Activated T-helper 1 cell treated with anti-CD3 and anti-CD28 coated beads, Interleukin-12 subunit alpha, Interleukin-12 subunit beta, Interleukin-2, Interleukin-4 antibody, amounts not matched to agents 30 ng/mL and 10 ng/mL and 1 ng/mL, durations not matched to agents 14 hours and 24 hours and 36 hours (primary cell): ENCODE measurements at regions of chr5 and their contacts with region 1.

Region 1: GRCh38 chr5:87412630-87413342 is at the start of gene CCNH:
- DNase-seq: peak; percentile 95
- H3K4me3 Mint-ChIP-seq: peak within 1 kb of the TSS; percentile 99
- H3K27ac Mint-ChIP-seq: peak within 1 kb of the TSS; percentile 94
- H3K4me1 Mint-ChIP-seq: peaks cover 40% of the 10 kb centered on the region
- H3K27me3 Mint-ChIP-seq: no peaks in the 10 kb centered on the region
- total RNA-seq, gene CCNH: 77.6 and 80.9 TPM in 2 replicates

Region 2: DNA sequence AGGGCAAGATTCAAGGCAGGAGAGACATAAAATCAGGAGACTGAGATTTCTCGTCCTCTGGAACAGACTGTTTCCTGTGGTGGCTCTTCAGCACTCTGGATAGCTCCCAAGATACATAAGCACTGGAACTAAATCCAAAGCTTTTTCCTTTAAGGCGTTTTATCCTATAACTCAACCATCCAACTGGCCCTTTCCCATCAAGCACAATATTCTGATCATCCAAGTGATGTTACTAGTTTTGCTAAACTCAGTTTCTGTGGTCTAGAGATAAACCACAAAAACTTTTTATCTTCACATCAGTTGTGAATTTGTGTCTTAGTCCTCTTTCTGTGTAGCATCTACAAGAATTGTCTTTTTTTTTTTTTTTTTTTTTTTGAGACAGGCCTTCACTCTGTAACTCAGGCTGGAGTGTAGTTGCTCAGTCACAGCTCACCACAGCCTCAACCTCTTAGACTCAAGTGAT is 495.6 kb before region 1 on chr5:
- intact Hi-C with region 1: loop called (anchors 5 kb)
- DNase-seq: peak; percentile 1
- H3K4me3 Mint-ChIP-seq: no peak overlapping the region
- H3K27ac Mint-ChIP-seq: no peak overlapping the region
- H3K4me1 Mint-ChIP-seq: peaks cover 21% of the 10 kb centered on the region
- H3K27me3 Mint-ChIP-seq: peaks cover 17% of the 10 kb centered on the region

Region 3: DNA sequence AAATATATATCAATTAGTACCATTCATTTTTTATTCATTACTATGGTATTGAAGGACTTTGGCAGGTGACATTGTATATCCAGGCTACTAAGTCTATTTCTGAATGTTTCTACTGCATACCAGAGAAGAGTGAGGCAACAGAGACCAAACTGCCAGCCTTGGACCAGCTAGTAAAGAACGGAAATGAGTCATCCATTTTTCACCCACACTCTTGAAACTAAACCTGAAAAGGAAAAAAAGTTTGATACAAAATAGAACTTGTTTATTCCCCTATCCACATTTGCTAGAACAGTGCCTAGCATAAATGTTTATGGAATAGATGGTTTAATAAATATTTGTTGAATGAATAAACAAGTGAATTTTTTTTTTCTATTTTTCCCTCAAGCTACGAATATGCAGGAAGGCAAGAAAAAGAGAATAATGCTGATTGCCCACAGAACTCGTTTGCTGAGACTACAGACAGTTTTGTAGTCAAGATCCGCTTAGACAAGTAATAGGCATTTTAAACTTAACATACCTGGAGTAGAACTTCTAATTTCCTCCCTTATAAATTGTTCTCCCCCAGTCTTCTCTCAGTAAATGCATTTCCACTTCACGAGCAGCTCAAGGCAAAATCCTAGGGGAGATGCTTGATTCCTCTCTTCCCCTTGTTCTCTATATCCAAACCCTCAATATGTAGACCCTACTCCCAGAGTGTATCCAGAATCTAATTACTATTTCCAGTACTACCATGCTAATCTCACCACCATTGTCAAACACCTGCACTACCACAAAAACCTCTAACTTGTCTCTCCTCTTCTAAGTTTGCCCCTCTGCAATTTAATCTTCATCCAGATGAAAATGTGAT is 291.3 kb before region 1 on chr5:
- intact Hi-C with region 1: loop called (anchors 2 kb)
- DNase-seq: peak; percentile 17
- H3K4me3 Mint-ChIP-seq: peak overlapping the region; percentile 40
- H3K27ac Mint-ChIP-seq: peak overlapping the region; percentile 73
- H3K4me1 Mint-ChIP-seq: peaks cover 59% of the 10 kb centered on the region
- H3K27me3 Mint-ChIP-seq: no peaks in the 10 kb centered on the region

Region 4: DNA sequence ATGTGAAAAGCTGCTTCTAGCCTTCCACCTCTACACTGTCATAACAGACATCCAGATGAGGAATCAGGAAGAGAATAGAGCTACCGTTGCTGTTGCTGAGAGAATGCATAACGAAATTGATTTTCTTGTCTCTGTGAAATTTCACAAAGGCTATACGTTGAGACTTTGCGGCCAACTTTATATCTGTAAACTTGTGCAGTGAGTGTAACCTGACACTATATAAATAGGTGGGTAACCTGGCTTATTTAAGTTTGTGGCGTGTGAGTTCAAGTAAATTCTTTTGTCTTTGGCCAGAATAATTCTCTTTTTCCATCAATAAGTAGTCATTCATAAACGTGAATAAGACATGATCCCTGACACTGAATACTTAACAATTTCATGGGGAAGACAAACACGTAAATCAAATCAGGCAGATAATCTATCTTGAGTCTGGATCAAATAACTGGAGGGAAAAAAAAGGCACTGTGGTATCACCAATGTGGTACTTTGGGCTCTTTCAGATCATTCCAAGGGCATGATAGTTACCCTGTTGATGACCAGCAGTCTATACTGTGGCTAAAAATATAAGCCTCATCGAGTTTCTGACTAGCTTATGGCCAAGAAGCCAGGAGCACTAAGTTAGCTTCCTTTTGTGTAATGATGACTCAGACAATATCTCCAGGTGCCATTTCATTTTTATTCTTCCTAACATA is 243.3 kb before region 1 on chr5:
- intact Hi-C with region 1: no loop called
- DNase-seq: no peak
- H3K4me3 Mint-ChIP-seq: no peak overlapping the region
- H3K27ac Mint-ChIP-seq: no peak overlapping the region
- H3K4me1 Mint-ChIP-seq: no peaks in the 10 kb centered on the region
- H3K27me3 Mint-ChIP-seq: peaks cover 2% of the 10 kb centered on the region

Region 5: DNA sequence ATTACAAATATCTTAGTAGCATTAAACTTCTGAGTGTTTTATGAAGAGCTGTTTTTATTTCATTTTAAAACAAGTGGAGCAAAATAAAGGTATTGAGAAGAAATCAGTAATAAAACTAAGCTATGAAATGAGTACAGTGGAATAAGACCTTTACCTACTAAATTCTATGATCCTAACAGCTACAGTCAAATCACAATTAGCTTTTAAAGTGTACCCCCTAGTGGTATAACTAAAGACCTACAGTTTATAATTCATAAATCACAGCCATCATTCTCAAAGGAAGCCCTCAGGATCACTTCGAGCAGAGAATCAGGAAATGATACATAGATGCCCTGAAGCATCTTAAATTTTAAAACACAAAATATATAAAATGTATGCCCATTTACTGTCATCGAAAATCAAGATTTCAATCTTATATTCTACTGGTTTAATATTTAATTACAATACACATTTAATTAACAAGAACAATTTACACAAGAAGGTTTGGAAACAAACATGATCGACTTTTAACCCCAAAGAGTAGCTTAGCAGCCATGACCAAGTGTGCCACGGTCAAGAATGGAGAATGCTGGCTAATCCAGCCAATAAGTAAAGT is 12.4 kb before region 1 on chr5:
- intact Hi-C with region 1: loop called (anchors 1 kb)
- DNase-seq: no peak
- H3K4me3 Mint-ChIP-seq: no peak overlapping the region
- H3K27ac Mint-ChIP-seq: no peak overlapping the region
- H3K4me1 Mint-ChIP-seq: peaks cover 24% of the 10 kb centered on the region
- H3K27me3 Mint-ChIP-seq: no peaks in the 10 kb centered on the region

Region 6: DNA sequence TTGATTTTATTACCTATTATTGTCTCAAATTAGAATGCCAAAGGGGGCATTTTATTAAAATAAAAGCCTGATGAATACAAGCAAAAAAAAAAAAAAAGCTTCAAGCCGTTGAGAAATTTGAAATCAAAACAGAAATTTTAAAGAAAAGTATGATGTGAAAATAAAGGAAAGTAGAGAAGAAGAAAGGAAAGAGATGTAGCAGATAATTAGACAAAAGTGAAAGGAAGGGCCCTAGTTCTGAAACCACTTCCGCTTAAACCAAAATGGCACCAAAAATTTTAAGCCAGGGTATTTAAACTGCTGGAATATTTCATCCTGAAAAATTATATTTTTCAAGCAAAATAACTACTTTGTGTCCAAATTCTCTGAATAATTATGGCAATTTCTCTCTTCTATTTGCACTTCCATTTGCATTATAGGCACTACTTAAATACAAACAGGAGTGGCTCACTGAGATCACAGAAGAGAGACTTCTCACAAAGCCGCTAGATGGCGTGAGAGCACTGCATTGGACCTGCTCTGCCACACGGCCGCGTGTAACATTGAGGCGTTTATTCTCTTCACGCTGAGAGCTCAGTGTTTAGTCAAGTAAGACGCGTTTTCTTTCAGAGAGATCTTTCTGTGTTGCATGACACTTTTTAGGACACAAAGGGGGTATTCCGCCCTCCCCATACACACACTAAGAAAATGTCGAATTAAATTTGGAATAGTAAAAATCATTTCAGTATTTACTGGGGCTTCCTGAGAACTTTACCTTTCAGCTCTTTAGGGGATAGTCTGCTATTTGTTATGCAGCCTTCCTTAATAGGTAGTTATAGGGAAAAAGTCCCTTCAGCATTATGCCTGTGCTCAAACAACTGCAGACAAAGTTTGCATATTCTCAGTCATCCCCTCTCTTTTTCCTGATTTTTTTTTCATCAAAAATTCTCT is 368.3 kb after region 1 on chr5:
- intact Hi-C with region 1: no loop called
- DNase-seq: peak; percentile 64
- H3K4me3 Mint-ChIP-seq: no peak overlapping the region
- H3K27ac Mint-ChIP-seq: no peak overlapping the region
- H3K4me1 Mint-ChIP-seq: no peaks in the 10 kb centered on the region
- H3K27me3 Mint-ChIP-seq: peaks cover 10% of the 10 kb centered on the region

Region 7: GRCh38 chr5:88660947-88661805 is 1248.4 kb after region 1 on chr5:
- intact Hi-C with region 1: loop called (anchors 10 kb)
- DNase-seq: no peak
- H3K4me3 Mint-ChIP-seq: peak overlapping the region; percentile 65
- H3K27ac Mint-ChIP-seq: peak overlapping the region; percentile 61
- H3K4me1 Mint-ChIP-seq: peaks cover 23% of the 10 kb centered on the region
- H3K27me3 Mint-ChIP-seq: peaks cover 71% of the 10 kb centered on the region